Activated CD4-positive, alpha-beta T cell treated with anti-CD3 and anti-CD28 coated beads, Interleukin-2, amount 10 ng/mL, durations not matched to agents 7 days and 5 days (primary cell): ENCODE measurements at regions of chr11 and their contacts with region 1.

Region 1: DNA sequence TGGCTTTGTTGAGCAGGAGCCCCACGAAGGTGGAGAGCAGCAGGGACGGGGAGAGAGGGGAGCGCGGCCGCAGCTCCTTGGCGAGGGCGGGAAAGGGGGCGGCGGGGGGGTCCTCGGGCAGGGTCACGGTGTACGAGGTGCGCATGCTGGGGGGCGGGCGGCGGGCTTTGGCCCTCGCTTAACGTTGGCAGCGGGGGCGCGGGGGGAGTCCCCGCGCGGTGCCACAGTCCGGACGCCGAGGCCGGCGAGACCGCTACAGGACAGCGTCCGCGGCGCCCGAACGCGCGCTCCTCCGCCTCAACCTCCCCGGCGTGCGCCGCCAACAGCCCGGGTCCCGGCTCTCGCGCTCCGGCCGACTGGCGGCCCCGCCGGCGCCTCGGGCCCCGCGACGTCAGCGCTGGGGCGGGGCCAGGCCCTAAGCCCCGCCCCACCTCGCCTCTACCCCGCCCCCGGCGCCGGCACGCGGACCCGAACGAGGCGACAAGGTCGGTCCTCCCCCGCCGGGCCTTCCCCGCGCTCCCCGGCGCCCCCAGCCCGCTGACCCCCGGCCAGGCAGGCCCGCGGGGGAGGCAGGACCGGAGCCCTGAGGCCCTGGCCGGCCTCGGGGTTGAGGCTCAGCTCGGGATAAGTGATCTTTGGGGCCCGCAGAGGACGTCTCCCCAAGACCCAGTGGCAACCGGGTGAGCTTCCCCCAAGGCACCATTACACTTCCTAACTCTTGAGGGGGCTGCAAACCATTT is 17.5 kb downstream of the USP2 start:
- DNase-seq: peak; percentile 45
- H3K4me3 Mint-ChIP-seq: peak overlapping the region; percentile 66
- H3K27ac Mint-ChIP-seq: no peak overlapping the region
- H3K4me1 Mint-ChIP-seq: peaks cover 13% of the 10 kb centered on the region
- H3K27me3 Mint-ChIP-seq: peaks cover 37% of the 10 kb centered on the region

Region 2: DNA sequence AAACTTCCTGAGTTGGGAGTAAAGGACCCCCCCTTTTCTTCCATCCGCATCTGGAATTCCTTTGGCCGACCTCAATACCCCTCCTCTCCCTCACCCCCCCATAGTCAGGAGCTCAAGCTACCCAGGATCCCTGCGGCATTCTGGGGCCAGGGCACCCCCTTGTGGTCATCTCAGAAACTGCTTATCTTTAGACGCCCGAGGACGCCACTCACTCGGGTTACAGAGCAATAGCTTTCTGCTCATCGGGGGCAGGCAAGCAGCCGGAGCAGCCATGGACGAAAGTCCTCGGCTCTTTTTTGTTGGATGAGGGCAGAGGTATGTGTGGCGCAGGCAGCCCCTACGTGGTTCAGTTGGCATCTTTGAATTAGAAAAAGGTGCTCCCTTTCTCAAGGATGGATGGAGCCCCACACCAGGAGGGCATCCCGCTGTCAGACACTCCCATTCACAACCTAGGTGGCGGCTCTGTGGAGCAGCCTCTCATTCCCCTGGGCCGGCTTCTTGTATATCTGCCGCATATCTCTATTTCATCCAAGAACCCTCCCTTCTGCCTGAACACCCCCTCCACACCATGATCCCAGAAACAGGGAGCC is 25.6 kb before region 1 on chr11:
- CTCF ChIA-PET with region 1: interaction called, 50 read pairs
- POLR2A ChIA-PET with region 1: no interaction called
- DNase-seq: peak; percentile 73
- H3K4me3 Mint-ChIP-seq: no peak overlapping the region
- H3K27ac Mint-ChIP-seq: no peak overlapping the region
- H3K4me1 Mint-ChIP-seq: peaks cover 59% of the 10 kb centered on the region
- H3K27me3 Mint-ChIP-seq: peaks cover 30% of the 10 kb centered on the region

Region 3: DNA sequence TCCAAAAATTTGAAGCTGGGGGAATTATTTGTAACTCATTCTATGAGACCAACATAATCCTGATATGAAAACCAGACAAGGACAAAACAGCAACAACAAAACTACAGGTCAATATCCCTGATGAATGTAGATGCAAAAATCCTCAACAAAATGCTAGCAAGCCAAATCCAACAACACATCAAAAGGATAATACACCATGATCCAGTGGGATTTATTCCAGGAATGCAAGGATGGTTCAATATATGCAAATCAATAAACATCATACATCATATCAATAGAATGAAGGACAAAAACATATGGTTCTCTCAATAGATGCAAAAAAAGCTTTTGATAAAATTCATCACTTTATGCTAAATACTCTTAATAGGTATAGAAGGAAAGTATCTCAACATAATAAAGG is 36.8 kb after region 1 on chr11:
- CTCF ChIA-PET with region 1: no interaction called
- POLR2A ChIA-PET with region 1: no interaction called
- DNase-seq: no peak
- H3K4me3 Mint-ChIP-seq: no peak overlapping the region
- H3K27ac Mint-ChIP-seq: no peak overlapping the region
- H3K4me1 Mint-ChIP-seq: no peaks in the 10 kb centered on the region
- H3K27me3 Mint-ChIP-seq: peaks cover 31% of the 10 kb centered on the region